ENCODE measurements at regions of chr11 and their contacts with region 1.

Region 1: GRCh38 chr11:78000193-78000592 is 5.7 kb upstream of the INTS4 start:
- DNase-seq: peak; percentile 70
- ATAC-seq: peak; percentile 92
- H3K4me3 ChIP-seq: no peak overlapping the region
- H3K27ac ChIP-seq: no peak overlapping the region
- H3K4me1 ChIP-seq: peaks cover 28% of the 10 kb centered on the region
- H3K27me3 ChIP-seq: no peaks in the 10 kb centered on the region
- CTCF ChIP-seq: peak; percentile 80
- EP300 ChIP-seq: no peak
- POLR2A ChIP-seq: no peak
- RAD21 ChIP-seq: peak; percentile 65; the same call in 1 of the 2 replicates

Region 2: DNA sequence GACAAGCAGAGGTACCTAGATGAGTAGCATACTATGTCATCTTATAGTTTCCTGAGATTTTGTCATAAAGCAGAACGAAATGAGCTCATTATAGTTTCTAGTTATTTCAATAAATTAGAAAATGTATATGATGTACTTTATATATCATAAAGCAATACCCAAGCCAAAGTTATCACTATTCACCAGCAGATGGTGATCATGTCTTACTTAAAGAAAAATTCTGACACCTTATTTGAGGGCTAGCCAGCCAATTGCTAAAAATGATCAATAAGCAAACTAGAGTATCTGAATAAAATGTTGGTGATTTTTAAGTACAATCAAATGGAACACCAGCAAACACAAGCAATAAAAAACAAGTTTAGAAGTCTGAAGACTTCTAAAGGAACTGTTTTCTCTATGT is 223.7 kb before region 1 on chr11:
- CTCF ChIA-PET with region 1: interaction called, 10 read pairs
- POLR2A ChIA-PET with region 1: no interaction called
- in situ Hi-C with region 1: loop called (anchors 5 kb)
- intact Hi-C with region 1: loop called (anchors 1 kb)
- DNase-seq: peak; percentile 29
- ATAC-seq: no peak
- H3K4me3 ChIP-seq: no peak overlapping the region
- H3K27ac ChIP-seq: no peak overlapping the region
- H3K4me1 ChIP-seq: peaks cover 17% of the 10 kb centered on the region
- H3K27me3 ChIP-seq: no peaks in the 10 kb centered on the region
- CTCF ChIP-seq: peak; percentile 52; the same call in 1 of the 2 replicates
- EP300 ChIP-seq: no peak
- POLR2A ChIP-seq: no peak
- RAD21 ChIP-seq: peak; percentile 39; the same call in 1 of the 2 replicates

Region 3: DNA sequence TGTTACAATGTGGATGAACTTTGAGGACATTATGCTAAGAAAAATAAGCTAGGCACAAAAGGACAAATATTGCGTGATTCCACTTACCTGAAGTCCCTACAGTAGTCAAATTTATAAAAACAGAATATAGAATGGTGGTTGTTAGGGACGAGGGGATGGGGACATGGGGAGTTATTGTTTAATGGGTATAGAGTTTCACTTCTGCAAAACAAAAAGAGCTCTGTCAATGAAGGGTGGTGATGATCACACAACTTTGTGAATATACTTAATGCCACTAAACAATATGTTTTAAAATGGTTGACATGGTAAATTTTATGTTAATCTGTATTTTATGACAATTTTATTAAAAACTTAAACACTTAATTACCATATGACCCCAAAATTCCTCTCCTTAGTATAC is 31.9 kb before region 1 on chr11:
- CTCF ChIA-PET with region 1: no interaction called
- POLR2A ChIA-PET with region 1: no interaction called
- in situ Hi-C with region 1: no loop called
- intact Hi-C with region 1: no loop called
- DNase-seq: no peak
- ATAC-seq: no peak
- H3K4me3 ChIP-seq: no peak overlapping the region
- H3K27ac ChIP-seq: no peak overlapping the region
- H3K4me1 ChIP-seq: no peaks in the 10 kb centered on the region
- H3K27me3 ChIP-seq: no peaks in the 10 kb centered on the region
- CTCF ChIP-seq: no peak
- EP300 ChIP-seq: no peak
- POLR2A ChIP-seq: no peak
- RAD21 ChIP-seq: no peak

Measured in HepG2 (cell line).